ENCODE measurements at regions of chr11 and their contacts with region 1.

Region 1: DNA sequence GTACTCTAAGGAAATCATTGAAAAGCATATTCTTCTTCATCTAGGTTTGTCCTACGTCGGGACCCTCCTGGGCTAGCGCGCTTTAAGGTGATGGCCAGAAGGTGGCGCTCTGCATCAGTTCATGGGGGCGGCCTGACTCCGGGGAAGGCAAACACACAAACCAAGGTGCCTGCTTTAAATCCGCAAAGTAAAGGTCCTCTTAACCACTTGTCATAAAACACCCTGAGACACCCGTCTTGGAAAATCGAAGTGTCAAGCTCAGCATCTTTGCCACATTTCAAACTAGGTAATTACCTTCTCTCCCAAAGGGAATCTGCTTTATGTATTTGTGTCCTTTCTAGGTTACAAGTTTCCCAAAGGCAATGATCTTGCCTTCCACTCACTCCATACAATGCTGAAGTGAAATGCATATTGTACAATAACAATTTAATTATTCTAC is 33.9 kb downstream of the LMO2 start:
- DNase-seq: peak; percentile 88
- H3K4me3 Mint-ChIP-seq: no peak overlapping the region
- H3K27ac Mint-ChIP-seq: no peak overlapping the region
- H3K4me1 Mint-ChIP-seq: no peaks in the 10 kb centered on the region
- H3K27me3 Mint-ChIP-seq: peaks cover 29% of the 10 kb centered on the region

Region 2: DNA sequence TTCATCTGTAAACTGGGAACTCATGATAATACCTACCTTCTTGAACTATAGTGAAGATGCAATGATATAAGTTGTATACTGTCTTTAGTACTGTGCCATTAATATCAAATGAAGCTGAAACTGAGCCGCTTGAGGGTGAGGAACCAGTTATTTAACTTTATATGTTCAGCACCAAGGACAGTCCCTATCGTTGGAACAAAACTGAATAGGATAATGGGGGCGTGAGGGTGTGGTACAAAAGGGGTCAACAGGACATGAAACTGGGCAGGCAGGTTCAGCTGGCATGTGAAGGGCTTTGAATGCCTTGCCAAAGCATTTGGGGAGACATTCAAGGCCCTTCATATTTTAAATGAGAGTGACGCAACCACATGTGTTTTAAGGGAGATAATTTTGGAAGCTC is 269.9 kb before region 1 on chr11:
- CTCF ChIA-PET with region 1: no interaction called
- intact Hi-C with region 1: no loop called
- DNase-seq: no peak
- H3K4me3 Mint-ChIP-seq: no peak overlapping the region
- H3K27ac Mint-ChIP-seq: no peak overlapping the region
- H3K4me1 Mint-ChIP-seq: no peaks in the 10 kb centered on the region
- H3K27me3 Mint-ChIP-seq: no peaks in the 10 kb centered on the region

Region 3: DNA sequence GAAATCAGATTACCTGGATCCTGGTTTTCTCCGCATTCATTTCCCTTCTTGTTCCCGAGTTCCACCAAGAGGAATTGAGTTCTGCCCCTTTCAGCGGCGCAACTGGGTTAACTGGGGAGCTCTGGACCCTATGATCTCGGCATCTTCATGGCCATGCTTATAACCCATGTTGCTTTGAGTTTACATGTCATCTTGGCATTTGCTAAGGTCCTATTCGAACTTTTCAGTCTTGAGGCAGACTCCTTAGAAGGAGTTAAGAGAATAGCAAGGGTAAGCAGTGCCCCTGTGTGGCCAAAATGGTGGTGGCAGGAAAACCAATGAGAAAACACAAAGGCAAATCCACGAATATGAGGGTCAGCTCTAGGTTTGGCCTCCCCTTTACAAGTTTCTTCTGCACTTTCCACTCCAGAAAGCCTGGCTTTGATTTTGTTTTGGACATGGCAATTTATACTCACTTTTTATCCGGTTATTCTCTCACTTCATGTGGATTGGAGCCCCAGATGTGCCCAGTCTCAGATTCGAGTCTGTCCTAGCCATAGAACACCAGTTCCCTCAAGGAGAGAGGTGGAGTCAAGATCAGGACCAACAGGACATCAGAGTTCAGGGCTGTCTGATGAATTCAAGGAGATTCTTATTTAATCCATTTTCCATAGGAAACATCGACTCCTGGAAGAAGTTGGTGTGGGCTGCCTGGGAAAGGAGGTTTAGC is 28.4 kb before region 1 on chr11:
- CTCF ChIA-PET with region 1: no interaction called
- intact Hi-C with region 1: no loop called
- DNase-seq: peak; percentile 85
- H3K4me3 Mint-ChIP-seq: peak overlapping the region; percentile 57
- H3K27ac Mint-ChIP-seq: no peak overlapping the region
- H3K4me1 Mint-ChIP-seq: peaks cover 2% of the 10 kb centered on the region
- H3K27me3 Mint-ChIP-seq: peaks cover 42% of the 10 kb centered on the region

Region 4: DNA sequence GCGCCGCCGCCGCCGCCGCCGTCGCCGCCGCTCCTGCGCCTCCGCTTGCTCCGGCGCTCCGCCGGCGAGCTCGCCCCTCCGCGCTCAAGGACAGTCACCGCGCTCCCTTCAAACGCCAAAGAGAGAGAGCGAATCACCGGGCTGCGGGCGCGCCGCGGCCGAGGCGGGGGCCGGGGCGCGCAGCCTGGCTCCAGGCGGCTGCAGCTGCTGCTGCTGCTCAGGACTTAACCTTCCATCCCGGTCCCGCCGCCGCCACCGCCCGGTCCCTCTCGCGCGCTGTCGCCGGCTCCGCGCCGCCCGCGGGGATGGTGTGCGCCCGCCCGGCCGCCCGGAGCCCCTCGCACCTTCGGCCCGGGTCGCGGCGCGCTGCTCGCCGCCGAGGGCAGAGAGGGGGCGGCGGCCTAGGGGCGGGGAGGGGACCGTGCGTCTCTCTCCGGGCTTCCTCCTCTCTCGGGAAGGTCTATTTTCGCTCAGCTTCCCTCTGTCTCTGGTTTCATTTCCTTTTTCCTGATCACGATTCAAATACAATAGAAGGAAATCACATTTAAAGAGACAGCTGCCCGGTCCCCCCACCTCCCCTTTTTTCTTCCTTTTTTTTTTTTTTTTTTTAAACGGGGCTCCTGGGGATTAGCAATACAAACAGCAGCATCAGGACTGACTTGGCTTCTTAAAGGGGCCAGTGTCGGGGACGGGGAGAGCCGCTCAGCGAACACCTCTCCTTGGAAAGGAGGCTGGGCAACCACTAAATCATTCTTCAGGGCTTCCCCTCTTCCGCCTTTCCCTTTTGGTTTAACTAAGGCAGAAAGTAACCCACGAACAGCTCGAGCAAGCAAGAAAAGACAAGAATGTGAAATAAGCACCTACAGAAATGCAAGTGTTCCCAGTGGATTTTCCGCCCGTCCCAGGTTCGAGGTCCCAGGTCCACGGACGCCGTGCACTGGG is 11.8 kb after region 1 on chr11:
- CTCF ChIA-PET with region 1: interaction called, 18 read pairs
- intact Hi-C with region 1: no loop called
- DNase-seq: peak; percentile 20
- H3K4me3 Mint-ChIP-seq: peak overlapping the region; percentile 76
- H3K27ac Mint-ChIP-seq: no peak overlapping the region
- H3K4me1 Mint-ChIP-seq: peaks cover 13% of the 10 kb centered on the region
- H3K27me3 Mint-ChIP-seq: peaks cover 58% of the 10 kb centered on the region

Region 5: DNA sequence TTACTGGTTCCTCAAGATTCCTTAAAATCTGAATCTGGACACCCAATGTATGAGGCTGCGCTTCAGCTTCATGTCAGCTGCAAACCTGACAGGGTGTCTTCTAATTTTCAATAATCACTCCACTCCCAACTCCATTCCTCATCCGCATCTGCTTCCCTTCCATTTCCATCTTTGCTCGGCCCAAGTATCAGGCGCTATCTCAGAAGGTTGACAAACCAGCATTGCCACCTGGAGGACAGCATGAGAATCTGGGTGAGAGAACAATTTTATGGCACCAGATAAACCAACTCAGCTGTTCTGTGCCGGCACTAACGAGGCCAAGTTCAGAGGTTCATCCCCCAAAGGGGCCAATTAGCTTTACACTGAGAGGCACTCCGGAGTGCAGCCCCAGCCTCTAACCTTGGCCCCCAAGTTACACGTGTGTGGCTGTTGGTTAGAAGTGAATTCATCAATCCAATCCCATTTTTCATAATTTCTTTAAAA is 113.1 kb after region 1 on chr11:
- CTCF ChIA-PET with region 1: interaction called, 21 read pairs
- intact Hi-C with region 1: loop called (anchors 1 kb)
- DNase-seq: peak; percentile 48
- H3K4me3 Mint-ChIP-seq: no peak overlapping the region
- H3K27ac Mint-ChIP-seq: no peak overlapping the region
- H3K4me1 Mint-ChIP-seq: peaks cover 2% of the 10 kb centered on the region
- H3K27me3 Mint-ChIP-seq: peaks cover 7% of the 10 kb centered on the region

Region 6: DNA sequence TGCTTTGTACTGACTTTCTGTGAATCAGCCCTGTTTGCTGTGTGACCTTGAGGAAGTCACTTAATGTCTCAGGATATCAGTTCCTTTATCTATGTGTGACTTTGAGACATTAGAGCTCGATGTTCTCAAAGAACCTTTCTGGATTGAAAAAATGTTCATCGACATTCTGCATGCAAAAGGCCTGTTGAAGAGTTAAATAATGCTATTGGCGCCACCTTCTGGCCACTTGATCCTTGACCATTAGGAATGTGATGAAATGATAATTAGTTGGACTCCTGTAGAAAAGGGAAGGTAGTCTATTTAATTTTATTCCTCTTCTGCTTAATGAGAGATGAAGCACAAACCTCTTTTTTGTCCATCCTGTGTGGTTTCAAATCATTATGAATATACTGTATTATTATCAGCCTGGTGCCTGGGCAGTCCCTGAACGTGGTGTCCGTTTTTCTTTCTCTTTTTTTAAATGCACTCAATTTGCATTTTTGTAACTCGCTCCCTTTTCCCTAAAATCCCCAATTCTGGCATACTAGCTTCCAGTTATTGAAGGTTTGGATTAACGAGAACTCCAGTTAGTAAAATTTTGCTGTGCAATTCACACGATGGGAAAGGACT is 635.0 kb after region 1 on chr11:
- CTCF ChIA-PET with region 1: interaction called, 3 read pairs
- intact Hi-C with region 1: loop called (anchors 10 kb)
- DNase-seq: peak; percentile 73
- H3K4me3 Mint-ChIP-seq: no peak overlapping the region
- H3K27ac Mint-ChIP-seq: no peak overlapping the region
- H3K4me1 Mint-ChIP-seq: no peaks in the 10 kb centered on the region
- H3K27me3 Mint-ChIP-seq: no peaks in the 10 kb centered on the region